Dendritic cell treated with granulocyte-macrophage colony-stimulating factor and Interleukin-4, amounts not matched to agents 40 ng/mL and 50 ng/mL, for 4 days (primary cell): ENCODE measurements at regions of chr3 and their contacts with region 1.

Region 1: GRCh38 chr3:160801386-160802118 is 45.5 kb downstream of the PPM1L start:
- H3K4me3 Mint-ChIP-seq: peak overlapping the region; percentile 75
- H3K27ac Mint-ChIP-seq: peak overlapping the region; percentile 92
- H3K4me1 Mint-ChIP-seq: peaks cover 65% of the 10 kb centered on the region
- H3K27me3 Mint-ChIP-seq: peaks cover under 1% of the 10 kb centered on the region

Region 2: GRCh38 chr3:160837394-160837980 is 35.9 kb after region 1 on chr3:
- intact Hi-C with region 1: loop called (anchors 5 kb)
- H3K4me3 Mint-ChIP-seq: peak overlapping the region; percentile 4
- H3K27ac Mint-ChIP-seq: peak overlapping the region; percentile 81
- H3K4me1 Mint-ChIP-seq: peaks cover 55% of the 10 kb centered on the region
- H3K27me3 Mint-ChIP-seq: no peaks in the 10 kb centered on the region

Region 3: GRCh38 chr3:160851629-160852210 is 50.2 kb after region 1 on chr3:
- intact Hi-C with region 1: no loop called
- H3K4me3 Mint-ChIP-seq: no peak overlapping the region
- H3K27ac Mint-ChIP-seq: no peak overlapping the region
- H3K4me1 Mint-ChIP-seq: peaks cover 19% of the 10 kb centered on the region
- H3K27me3 Mint-ChIP-seq: no peaks in the 10 kb centered on the region